Heart left ventricle (tissue), 16 donors: ENCODE measurements at regions of chr18 and their contacts with region 1.

Region 1: GRCh38 chr18:11040823-11041656 is 108.3 kb downstream of the PIEZO2 start:
- DNase-seq: peak in 2 of 5 donors; percentile 36 to 37
- ATAC-seq: peak in 2 of 4 donors; percentile 58 to 63
- H3K4me3 ChIP-seq: no peak overlapping the region
- H3K27ac ChIP-seq: no peak overlapping the region
- H3K4me1 ChIP-seq: no peaks in the 10 kb centered on the region
- H3K27me3 ChIP-seq: peaks cover 0 to 3% (median 0%) of the 10 kb centered on the region in 9 donors
- CTCF ChIP-seq: peak; percentile 55 to 87 (median 72)
- POLR2A ChIP-seq: no peak

Region 2: DNA sequence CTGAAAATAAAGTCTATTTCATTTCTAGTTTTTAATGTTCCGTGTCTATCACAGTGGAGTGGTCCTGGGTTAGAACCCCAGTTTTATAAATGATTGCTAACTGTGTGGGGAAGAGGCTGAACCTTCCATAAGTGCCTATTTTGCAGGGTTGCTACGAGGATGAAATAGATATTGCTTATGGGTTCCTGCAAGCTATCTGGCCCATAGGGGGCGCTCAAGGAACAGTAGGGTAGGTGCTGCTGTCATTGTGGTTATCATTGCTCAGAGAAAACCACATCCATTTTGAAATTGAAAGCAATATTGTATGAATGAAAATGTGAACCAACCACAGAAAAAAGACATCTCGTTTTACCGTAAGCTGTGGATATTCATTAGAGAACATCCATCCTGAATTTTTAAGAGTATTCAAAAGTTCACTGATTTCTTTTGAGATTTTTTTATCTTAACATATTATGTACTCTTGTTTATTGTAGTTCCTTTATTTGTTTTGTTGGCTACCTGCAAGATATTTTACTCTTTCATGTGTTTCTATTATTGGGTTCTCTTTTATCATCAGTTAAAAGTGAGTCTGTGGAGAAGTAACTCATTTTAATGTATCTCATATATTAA is 253.6 kb before region 1 on chr18:
- intact Hi-C with region 1: loop called in 2 of 10 experiments (anchors 5 kb)
- DNase-seq: peak; percentile 52 to 83 (median 66)
- ATAC-seq: peak in 1 of 4 donors; percentile 63
- H3K4me3 ChIP-seq: no peak overlapping the region
- H3K27ac ChIP-seq: no peak overlapping the region
- H3K4me1 ChIP-seq: peaks cover 0 to 6% (median 0%) of the 10 kb centered on the region in 12 donors
- H3K27me3 ChIP-seq: no peaks in the 10 kb centered on the region
- CTCF ChIP-seq: peak; percentile 46 to 77 (median 63)
- POLR2A ChIP-seq: no peak